SK-N-SH (cell line): ENCODE measurements at regions of chr14 and their contacts with region 1.

Region 1: DNA sequence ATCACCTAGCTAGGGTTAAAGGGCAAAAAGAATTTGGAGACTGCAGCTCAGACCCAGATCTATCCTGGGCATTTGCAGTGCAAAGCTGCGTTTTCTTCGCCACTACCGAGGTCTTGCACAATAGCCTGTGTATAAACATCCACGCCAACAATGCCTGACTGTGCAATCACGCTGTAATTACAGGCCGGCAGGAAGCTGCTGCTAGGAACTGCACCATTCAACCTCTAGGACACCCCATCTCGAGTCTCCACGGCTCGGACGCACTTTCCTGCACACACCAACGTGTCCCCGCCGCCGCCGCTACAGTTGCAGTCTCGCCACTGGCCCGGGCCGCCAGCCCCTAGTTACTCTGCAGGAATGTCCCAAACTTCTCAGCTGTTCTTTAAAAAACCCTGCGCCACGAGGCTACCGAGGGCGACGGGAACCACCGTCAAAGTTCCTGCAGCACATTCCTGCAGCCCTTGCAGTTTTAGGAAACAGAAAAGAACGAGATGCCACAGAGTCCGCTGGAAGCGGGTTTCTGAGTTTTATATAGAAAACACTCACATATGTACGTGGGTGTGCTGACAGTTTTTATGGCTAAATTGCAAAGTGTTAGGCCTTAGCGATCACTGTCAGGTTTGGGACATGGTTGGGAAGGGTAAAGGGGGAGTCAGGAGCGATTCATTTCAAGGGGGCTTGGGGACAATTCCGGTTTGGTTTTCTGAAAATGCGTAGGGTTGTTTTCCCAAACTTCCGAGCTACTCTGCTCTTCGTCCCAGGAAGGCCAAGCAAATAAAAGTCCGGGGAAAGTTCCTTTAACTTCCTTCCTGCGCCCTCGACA is 65.5 kb upstream of the PTGR2 start:
- DNase-seq: peak; percentile 74
- H3K4me3 ChIP-seq: peak overlapping the region; percentile 80 to 88
- H3K27ac ChIP-seq: peak overlapping the region; percentile 72 to 87
- H3K4me1 ChIP-seq: peaks cover 20 to 31% of the 10 kb centered on the region in 2 experiments
- H3K27me3 ChIP-seq: no peaks in the 10 kb centered on the region
- CTCF ChIP-seq: no peak; the same call in 1 of the 2 replicates
- EP300 ChIP-seq: no peak
- RAD21 ChIP-seq: no peak

Region 2: GRCh38 chr14:73599499-73599898 is 186.6 kb before region 1 on chr14:
- CTCF ChIA-PET with region 1: no interaction called
- POLR2A ChIA-PET with region 1: no interaction called
- DNase-seq: no peak
- H3K4me3 ChIP-seq: no peak overlapping the region
- H3K27ac ChIP-seq: no peak overlapping the region
- H3K4me1 ChIP-seq: no peaks in the 10 kb centered on the region
- H3K27me3 ChIP-seq: no peaks in the 10 kb centered on the region
- CTCF ChIP-seq: no peak
- EP300 ChIP-seq: no peak
- RAD21 ChIP-seq: no peak

Region 3: GRCh38 chr14:73685328-73685727 is 100.8 kb before region 1 on chr14:
- CTCF ChIA-PET with region 1: no interaction called
- POLR2A ChIA-PET with region 1: no interaction called
- DNase-seq: no peak
- H3K4me3 ChIP-seq: no peak overlapping the region
- H3K27ac ChIP-seq: no peak overlapping the region
- H3K4me1 ChIP-seq: no peaks in the 10 kb centered on the region
- H3K27me3 ChIP-seq: no peaks in the 10 kb centered on the region
- CTCF ChIP-seq: no peak
- EP300 ChIP-seq: no peak
- RAD21 ChIP-seq: no peak

Region 4: GRCh38 chr14:73771848-73772638 is 14.0 kb before region 1 on chr14:
- CTCF ChIA-PET with region 1: interaction called, 18 read pairs
- POLR2A ChIA-PET with region 1: interaction called, 4 read pairs
- DNase-seq: peak; percentile 79
- H3K4me3 ChIP-seq: no peak overlapping the region
- H3K27ac ChIP-seq: peak overlapping the region in 1 of 2 experiments; percentile 65; a peak in 2 of 4 replicates
- H3K4me1 ChIP-seq: peaks cover 21 to 22% of the 10 kb centered on the region in 2 experiments
- H3K27me3 ChIP-seq: no peaks in the 10 kb centered on the region
- CTCF ChIP-seq: no peak
- EP300 ChIP-seq: no peak
- RAD21 ChIP-seq: no peak